Esophagus muscularis mucosa (tissue), 4 donors: ENCODE measurements at regions of chr2 and their contacts with region 1.

Region 1: DNA sequence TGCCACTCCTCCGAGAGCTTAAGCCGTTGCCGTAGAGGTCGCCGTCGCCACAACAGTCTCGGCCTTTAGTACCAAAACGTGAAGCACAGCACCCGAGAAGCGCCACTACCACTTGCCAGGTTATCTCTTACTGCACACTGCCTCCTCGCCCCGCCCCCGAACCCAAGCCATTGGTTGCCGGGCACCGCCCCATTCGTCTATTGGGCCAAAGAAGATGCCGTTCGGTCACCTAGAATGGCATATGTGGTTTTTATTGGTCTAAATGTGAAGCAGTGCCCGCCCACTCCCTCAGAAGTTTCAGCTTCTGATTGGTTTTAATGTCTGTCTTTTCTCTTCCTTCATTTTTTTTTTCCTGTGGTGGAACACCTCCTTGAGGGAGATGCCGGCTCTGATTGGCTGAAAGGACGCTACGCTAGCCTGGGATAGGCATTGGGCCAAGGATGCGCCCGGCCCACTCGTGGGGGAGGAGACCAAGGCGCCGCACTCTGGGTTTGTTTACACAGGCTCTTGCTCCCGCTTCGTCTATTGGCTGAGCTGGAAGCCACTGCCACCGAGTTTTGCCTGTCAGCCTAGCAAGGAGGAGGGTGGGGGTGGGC is at the start of gene PAIP2B:
- DNase-seq: peak; percentile 100
- H3K4me3 ChIP-seq: peak within 1 kb of the TSS; percentile 88 to 92 (median 92)
- H3K27ac ChIP-seq: peak within 1 kb of the TSS; percentile 87 to 94 (median 90)
- H3K4me1 ChIP-seq: peaks cover 0 to 26% (median 21%) of the 10 kb centered on the region in 4 donors
- H3K27me3 ChIP-seq: no peaks in the 10 kb centered on the region
- CTCF ChIP-seq: no peak
- EP300 ChIP-seq: no peak
- POLR2A ChIP-seq: no peak
- total RNA-seq, gene PAIP2B: 11.2 to 16.9 (median 12.6) TPM

Region 2: DNA sequence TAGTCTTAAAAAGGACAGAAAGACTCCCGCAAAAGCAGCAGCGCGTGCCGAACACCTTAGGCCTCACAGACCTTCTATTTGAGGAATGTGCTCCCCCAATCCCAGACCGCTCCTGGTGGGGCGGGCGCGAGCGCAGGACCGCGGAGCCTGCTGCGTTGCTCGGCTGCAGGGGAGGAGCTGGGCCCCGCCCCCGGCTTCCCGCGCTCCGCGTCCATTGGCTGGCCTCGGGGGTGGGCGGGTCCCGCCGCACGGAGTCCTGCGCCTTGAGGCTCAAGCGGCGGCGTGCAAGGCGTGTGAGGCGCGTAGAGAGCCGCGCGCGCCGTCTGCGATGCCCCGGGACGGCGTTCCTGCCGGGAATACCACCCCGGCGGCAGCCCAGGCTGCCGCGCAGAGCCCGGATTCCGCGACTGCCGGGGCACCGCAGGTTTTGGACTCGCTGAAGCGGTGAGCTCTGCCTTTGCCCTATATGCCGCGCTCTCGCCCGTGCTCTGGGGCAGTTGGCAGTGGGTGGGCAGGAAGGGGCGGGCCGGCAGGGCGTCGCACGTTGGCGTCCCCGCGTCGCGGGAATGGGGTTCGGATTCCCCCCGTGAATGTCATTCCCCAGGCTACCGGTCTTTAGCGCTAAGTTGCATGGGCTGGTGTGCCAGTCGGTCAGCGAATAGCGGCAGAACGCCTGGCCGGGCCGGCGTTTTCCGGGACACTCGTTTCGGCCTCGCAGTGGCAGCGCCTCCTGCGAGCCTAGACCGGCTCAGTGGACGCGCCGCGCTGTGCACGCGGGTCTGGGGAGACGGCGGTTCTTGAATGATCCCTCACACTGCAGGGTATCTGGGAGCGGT is 49.5 kb after region 1 on chr2:
- intact Hi-C with region 1: loop called (anchors 5 kb)
- DNase-seq: no peak
- H3K4me3 ChIP-seq: peak overlapping the region; percentile 57 to 70 (median 64)
- H3K27ac ChIP-seq: peak overlapping the region; percentile 64 to 85 (median 76)
- H3K4me1 ChIP-seq: peaks cover 3 to 23% (median 22%) of the 10 kb centered on the region in 4 donors
- H3K27me3 ChIP-seq: peaks cover 0 to 53% (median 5%) of the 10 kb centered on the region in 4 donors
- CTCF ChIP-seq: no peak
- EP300 ChIP-seq: no peak
- POLR2A ChIP-seq: peak; percentile 36

Region 3: GRCh38 chr2:71331581-71332434 is 104.7 kb after region 1 on chr2 and contains the start of gene ZNF638:
- intact Hi-C with region 1: loop called (anchors 2 kb)
- DNase-seq: peak; percentile 95
- H3K4me3 ChIP-seq: peak within 1 kb of the TSS; percentile 95 to 97 (median 96)
- H3K27ac ChIP-seq: peak within 1 kb of the TSS; percentile 91 to 96 (median 96)
- H3K4me1 ChIP-seq: peaks cover 32 to 47% (median 45%) of the 10 kb centered on the region in 4 donors
- H3K27me3 ChIP-seq: no peaks in the 10 kb centered on the region
- CTCF ChIP-seq: peak; percentile 79 to 83 (median 79)
- EP300 ChIP-seq: no peak
- POLR2A ChIP-seq: peak; percentile 92
- total RNA-seq, gene ZNF638: 77.1 to 132 (median 86.4) TPM